ENCODE measurements at regions of chr12 and their contacts with region 1.

Region 1: DNA sequence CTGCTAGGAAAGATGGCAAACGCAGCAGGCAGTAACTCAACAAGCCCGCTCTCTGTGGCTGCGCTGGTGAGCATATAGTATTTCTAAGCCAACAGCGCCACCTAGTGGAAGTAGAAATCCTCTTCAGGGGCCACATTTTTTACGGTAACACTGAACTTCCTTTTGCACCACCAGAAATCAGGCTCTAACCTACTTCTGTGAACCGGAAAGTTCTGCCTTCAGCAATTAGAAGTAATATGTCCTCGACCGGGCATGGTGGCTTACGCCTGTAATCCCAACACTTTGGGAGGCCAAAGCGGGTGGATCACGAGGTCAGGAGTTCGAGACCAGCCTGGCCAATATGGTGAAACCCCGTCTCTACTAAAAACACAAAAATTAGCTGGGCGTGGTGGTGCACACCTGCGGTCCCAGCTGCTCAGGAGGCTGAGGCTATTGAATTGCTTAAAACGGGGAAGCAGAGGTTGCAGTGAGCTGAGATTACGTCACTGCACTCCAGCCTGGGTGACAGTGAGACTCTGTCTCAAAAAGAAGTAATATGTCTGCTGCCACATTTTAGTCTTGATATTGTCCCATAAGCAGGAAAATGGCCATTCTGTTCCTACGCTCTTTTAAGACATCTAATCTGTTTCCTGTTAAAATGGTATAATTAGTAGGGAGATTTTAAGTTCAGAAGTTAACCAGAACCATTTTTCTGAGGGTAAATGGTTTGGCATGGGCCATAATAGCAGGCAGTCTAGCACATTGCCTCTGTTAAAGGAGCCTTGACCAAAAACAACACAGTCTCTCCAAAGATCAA is 26.8 kb downstream of the APOBEC1 start:
- DNase-seq: peak; percentile 39 to 77
- H3K4me3 ChIP-seq: peak overlapping the region; percentile 40 to 63 (median 46); a peak in 7 of 8 replicates
- H3K27ac ChIP-seq: no peak overlapping the region
- H3K4me1 ChIP-seq: peaks cover 4 to 21% (median 11%) of the 10 kb centered on the region in 4 experiments; a peak in 6 of 7 replicates
- H3K27me3 ChIP-seq: no peaks in the 10 kb centered on the region
- CTCF ChIP-seq: peak; percentile 16 to 97 (median 88)
- EP300 ChIP-seq: no peak
- POLR2A ChIP-seq: peak in 1 of 2 experiments; percentile 9; a peak in 2 of 3 replicates
- RAD21 ChIP-seq: peak; percentile 97 to 99

Region 2: DNA sequence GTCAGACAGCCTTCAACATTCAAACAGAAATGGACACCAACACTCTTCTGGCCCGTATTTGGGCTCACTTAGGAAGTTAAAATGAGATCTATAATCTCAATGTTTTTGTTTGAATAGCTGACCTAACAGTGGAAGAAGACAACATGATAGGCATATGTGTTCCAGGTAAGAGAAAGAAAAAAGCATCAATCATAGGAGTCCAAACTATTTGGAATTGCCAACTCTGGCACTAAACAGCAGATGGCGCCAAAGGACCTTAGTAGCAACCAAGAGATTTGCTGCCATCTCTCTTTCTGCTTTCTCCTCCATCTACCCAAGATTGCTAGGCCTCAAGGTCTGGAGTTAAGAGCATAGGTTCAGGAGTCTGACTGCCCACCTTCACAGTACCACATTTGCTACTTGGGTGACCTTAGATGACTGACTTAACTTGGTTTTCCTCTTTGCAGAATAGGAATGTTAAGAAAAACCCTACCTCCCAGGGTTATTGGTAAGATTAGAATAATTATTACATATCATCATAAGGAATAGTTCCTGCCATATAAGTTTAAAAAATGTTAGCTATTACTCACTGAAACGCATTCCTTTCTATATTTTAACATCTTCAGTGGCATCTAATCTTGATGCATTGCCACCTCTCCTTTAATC is 419.2 kb before region 1 on chr12:
- CTCF ChIA-PET with region 1: interaction called, 24 read pairs
- POLR2A ChIA-PET with region 1: no interaction called
- DNase-seq: peak; percentile 34 to 69
- H3K4me3 ChIP-seq: no peak overlapping the region
- H3K27ac ChIP-seq: no peak overlapping the region
- H3K4me1 ChIP-seq: peaks cover 0 to 5% (median 3%) of the 10 kb centered on the region in 4 experiments; a peak in 6 of 7 replicates
- H3K27me3 ChIP-seq: no peaks in the 10 kb centered on the region
- CTCF ChIP-seq: peak in 2 of 3 experiments; percentile 94 to 96; a peak in 3 of 4 replicates
- EP300 ChIP-seq: no peak
- POLR2A ChIP-seq: no peak
- RAD21 ChIP-seq: peak; percentile 100

Region 3: GRCh38 chr12:7479771-7480170 is 159.2 kb before region 1 on chr12:
- CTCF ChIA-PET with region 1: no interaction called
- POLR2A ChIA-PET with region 1: no interaction called
- DNase-seq: no peak
- H3K4me3 ChIP-seq: no peak overlapping the region
- H3K27ac ChIP-seq: no peak overlapping the region
- H3K4me1 ChIP-seq: no peaks in the 10 kb centered on the region
- H3K27me3 ChIP-seq: no peaks in the 10 kb centered on the region
- CTCF ChIP-seq: no peak
- EP300 ChIP-seq: no peak
- POLR2A ChIP-seq: no peak
- RAD21 ChIP-seq: no peak

Region 4: DNA sequence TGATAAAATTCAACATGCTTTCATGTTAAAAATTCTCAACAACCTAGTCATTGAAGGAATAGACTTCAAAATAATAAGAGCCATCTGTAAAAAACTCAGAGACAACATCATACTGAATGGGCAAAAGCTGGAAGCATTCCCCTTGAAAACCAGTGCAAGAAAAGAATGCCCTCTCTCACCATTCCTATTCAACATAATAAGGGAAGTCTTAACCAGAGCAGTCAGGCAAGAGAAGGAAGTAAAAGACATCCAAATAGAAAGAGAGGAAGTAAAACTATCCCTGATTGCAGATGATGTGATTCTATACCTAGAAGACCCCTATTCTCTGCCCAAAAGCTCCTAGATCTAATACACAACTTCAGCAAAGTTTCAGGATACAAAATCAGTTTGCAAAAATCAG is 26.1 kb before region 1 on chr12:
- CTCF ChIA-PET with region 1: interaction called, 18 read pairs
- POLR2A ChIA-PET with region 1: no interaction called
- DNase-seq: no peak
- H3K4me3 ChIP-seq: no peak overlapping the region
- H3K27ac ChIP-seq: no peak overlapping the region
- H3K4me1 ChIP-seq: peaks cover 0 to 4% (median 0%) of the 10 kb centered on the region in 4 experiments; a peak in 1 of 7 replicates
- H3K27me3 ChIP-seq: no peaks in the 10 kb centered on the region
- CTCF ChIP-seq: no peak
- EP300 ChIP-seq: no peak
- POLR2A ChIP-seq: no peak
- RAD21 ChIP-seq: no peak

Region 5: GRCh38 chr12:7628381-7628961 is 10.5 kb before region 1 on chr12:
- CTCF ChIA-PET with region 1: interaction called, 10 read pairs
- POLR2A ChIA-PET with region 1: interaction called, 5 read pairs
- DNase-seq: no peak
- H3K4me3 ChIP-seq: peak overlapping the region; percentile 56 to 69 (median 64)
- H3K27ac ChIP-seq: no peak overlapping the region
- H3K4me1 ChIP-seq: no peaks in the 10 kb centered on the region; a peak in 2 of 7 replicates
- H3K27me3 ChIP-seq: no peaks in the 10 kb centered on the region
- CTCF ChIP-seq: peak in 2 of 3 experiments; percentile 9 to 22; a peak in 2 of 4 replicates
- EP300 ChIP-seq: no peak
- POLR2A ChIP-seq: no peak
- RAD21 ChIP-seq: peak; percentile 12 to 14; a peak in 2 of 4 replicates

Region 6: DNA sequence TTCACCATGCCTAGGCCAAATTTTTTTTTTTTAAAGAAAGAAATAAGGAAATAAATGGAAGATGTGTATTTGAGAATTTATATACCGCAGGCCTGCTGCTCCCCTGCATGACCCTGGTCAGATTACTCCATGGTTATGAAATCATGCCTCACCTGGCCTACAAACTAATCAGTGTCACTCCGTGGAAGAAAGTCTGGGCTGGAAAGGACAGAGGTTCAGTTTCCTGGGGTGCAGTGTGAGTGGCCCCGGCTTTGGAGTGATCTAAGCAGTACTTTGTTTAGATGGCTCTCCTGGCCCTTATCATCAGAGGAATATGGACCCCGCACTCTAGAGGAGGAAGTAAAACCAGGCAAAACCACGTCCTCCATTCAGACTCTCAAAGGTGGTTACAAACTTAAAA is 17.2 kb after region 1 on chr12:
- CTCF ChIA-PET with region 1: interaction called, 45 read pairs
- POLR2A ChIA-PET with region 1: interaction called, 5 read pairs
- DNase-seq: no peak
- H3K4me3 ChIP-seq: no peak overlapping the region
- H3K27ac ChIP-seq: no peak overlapping the region
- H3K4me1 ChIP-seq: no peaks in the 10 kb centered on the region
- H3K27me3 ChIP-seq: no peaks in the 10 kb centered on the region; a peak in 1 of 7 replicates
- CTCF ChIP-seq: no peak
- EP300 ChIP-seq: no peak
- POLR2A ChIP-seq: no peak
- RAD21 ChIP-seq: no peak